K562 (cell line): ENCODE measurements at regions of chr6 and their contacts with region 1.

Region 1: DNA sequence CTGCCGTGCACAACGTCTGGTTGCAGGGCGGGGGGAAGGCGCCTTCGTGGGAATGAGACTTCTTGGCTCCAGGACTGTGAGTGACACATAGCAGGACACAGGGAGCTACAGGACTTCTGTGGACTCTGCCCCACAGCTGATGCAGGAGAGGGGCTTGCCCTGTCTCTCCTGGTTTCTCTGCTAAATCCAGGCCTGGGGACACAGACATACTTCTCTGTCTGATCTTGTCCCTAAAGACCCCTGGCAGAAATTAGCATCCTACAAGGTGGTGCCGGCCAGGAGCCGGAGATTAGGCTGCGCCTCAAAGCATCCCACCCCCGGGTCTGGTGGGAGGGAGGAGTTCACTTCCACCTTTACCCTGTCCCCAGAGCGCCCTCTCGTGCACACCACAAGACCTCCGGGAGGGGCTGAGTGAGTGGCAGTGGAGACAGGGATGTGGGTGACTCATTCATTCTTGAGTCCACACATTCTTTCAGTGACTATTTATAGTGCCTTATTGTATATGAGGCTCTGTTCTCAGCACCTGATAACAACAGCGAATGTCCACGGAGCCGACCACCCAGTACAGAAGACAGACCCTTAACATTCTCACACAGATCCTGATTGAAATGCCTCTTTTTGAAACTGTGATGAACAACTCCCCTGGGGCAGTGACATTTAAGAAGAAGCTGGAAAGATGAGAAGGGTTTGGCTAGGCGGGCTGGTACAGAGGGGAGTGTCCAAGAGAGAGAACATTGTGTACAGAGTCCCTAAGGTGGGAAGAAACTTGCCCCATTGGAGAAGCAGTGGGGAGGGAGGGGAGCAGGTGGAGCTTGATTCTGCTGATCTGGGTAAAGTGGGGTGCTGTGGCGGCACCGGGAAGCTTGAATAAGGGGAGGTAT is 39.0 kb downstream of the GMPR start:
- DNase-seq: peak; percentile 93 to 97 (median 94)
- ATAC-seq: peak; percentile 100
- H3K4me3 ChIP-seq: no peak overlapping the region
- H3K27ac ChIP-seq: peak overlapping the region; percentile 51
- H3K4me1 ChIP-seq: peaks cover 15 to 28% of the 10 kb centered on the region in 2 experiments
- H3K27me3 ChIP-seq: no peaks in the 10 kb centered on the region
- CTCF ChIP-seq: peak; percentile 92 to 98 (median 98)
- EP300 ChIP-seq: peak; percentile 64
- POLR2A ChIP-seq: no peak
- RAD21 ChIP-seq: peak; percentile 87 to 97

Region 2: DNA sequence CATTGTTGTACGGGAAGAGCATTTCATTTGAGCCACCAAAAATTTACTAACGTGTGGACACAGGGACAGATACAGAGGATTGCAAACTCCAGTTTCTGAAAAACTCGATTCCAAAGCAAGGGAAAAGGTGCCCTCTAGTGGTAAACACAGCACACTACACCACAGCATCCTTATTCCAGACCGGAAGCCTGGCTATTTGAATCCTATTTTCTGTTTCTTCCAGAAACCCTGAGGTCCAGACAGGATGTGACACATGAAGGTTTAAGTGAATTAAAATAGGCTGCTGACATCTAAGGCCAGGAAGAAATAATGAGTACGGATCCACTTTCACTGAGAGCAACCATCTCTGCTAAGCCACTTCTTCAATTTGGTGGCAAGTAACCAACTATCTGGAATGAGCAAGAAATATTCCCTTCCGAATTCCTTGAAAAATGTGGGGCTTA is 70.7 kb before region 1 on chr6:
- CTCF ChIA-PET with region 1: no interaction called
- POLR2A ChIA-PET with region 1: interaction called, 4 read pairs
- in situ Hi-C with region 1: no loop called
- intact Hi-C with region 1: loop called (anchors 1 kb)
- DNase-seq: peak; percentile 79 to 84 (median 79)
- ATAC-seq: peak; percentile 88
- H3K4me3 ChIP-seq: no peak overlapping the region
- H3K27ac ChIP-seq: no peak overlapping the region; the same call in 1 of the 3 replicates
- H3K4me1 ChIP-seq: peaks cover 8 to 14% of the 10 kb centered on the region in 2 experiments; a peak in 4 of 5 replicates
- H3K27me3 ChIP-seq: no peaks in the 10 kb centered on the region
- CTCF ChIP-seq: peak; percentile 88 to 98 (median 96)
- EP300 ChIP-seq: no peak; the same call in 1 of the 2 replicates
- POLR2A ChIP-seq: no peak
- RAD21 ChIP-seq: peak; percentile 97

Region 3: GRCh38 chr6:16292942-16293341 is 15.6 kb after region 1 on chr6:
- CTCF ChIA-PET with region 1: no interaction called
- POLR2A ChIA-PET with region 1: interaction called, 13 read pairs
- in situ Hi-C with region 1: no loop called
- intact Hi-C with region 1: no loop called
- DNase-seq: no peak
- ATAC-seq: no peak
- H3K4me3 ChIP-seq: no peak overlapping the region
- H3K27ac ChIP-seq: no peak overlapping the region
- H3K4me1 ChIP-seq: peaks cover 0 to 6% of the 10 kb centered on the region in 2 experiments; a peak in 1 of 5 replicates
- H3K27me3 ChIP-seq: no peaks in the 10 kb centered on the region
- CTCF ChIP-seq: no peak
- EP300 ChIP-seq: no peak
- POLR2A ChIP-seq: no peak
- RAD21 ChIP-seq: no peak

Region 4: DNA sequence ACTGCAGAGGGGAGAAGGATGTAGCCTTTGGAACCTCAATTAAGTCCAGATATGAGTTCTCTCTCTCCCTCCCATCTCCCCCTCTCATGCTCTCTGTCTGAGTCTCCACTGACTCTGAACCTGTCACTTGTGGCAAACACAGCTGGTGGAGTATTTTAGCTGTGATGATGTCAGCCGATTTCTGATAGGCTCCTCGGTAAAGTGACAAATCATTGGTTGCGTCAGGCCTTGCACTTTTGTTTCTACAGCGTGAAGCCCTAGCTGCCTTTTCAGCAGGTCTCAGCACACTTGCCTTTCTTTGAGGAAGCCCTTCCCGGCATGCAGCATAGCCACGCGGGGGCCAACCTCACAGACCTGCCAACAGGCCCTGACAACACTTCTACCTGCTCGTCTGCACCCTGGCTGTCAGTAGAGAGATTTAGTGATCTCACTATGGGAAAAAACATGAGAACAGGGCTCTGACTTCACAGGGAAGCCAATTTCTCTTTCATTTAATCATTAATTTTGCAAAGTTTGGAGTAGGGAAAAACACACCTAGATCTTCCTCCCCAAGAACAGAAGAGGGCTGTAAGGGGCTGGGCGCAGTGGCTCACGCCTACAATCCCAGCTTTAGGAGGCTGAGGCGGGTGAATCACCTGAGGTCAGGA is 45.4 kb after region 1 on chr6:
- CTCF ChIA-PET with region 1: no interaction called
- POLR2A ChIA-PET with region 1: no interaction called
- in situ Hi-C with region 1: no loop called
- intact Hi-C with region 1: loop called (anchors 2 kb)
- DNase-seq: peak; percentile 78 to 91 (median 82)
- ATAC-seq: peak; percentile 92
- H3K4me3 ChIP-seq: no peak overlapping the region
- H3K27ac ChIP-seq: peak overlapping the region; percentile 72
- H3K4me1 ChIP-seq: peaks cover 31 to 41% of the 10 kb centered on the region in 2 experiments
- H3K27me3 ChIP-seq: no peaks in the 10 kb centered on the region; a peak in 1 of 5 replicates
- CTCF ChIP-seq: no peak; a peak in 1 of 6 replicates
- EP300 ChIP-seq: peak; percentile 44; the same call in 1 of the 2 replicates
- POLR2A ChIP-seq: peak; percentile 61
- RAD21 ChIP-seq: 0 out of 4 replicates have a peak, but pooled peaks of 1 of the 2 experiments have one; percentile 11